ENCODE measurements at regions of chr15 and their contacts with region 1.

Region 1: GRCh38 chr15:70463460-70463881 is 299.9 kb downstream of the UACA start:
- DNase-seq: no peak
- H3K4me3 ChIP-seq: no peak overlapping the region
- H3K27ac ChIP-seq: no peak overlapping the region
- H3K4me1 ChIP-seq: peaks cover 0 to 11% (median 4%) of the 10 kb centered on the region in 4 donors
- H3K27me3 ChIP-seq: no peaks in the 10 kb centered on the region
- CTCF ChIP-seq: no peak
- EP300 ChIP-seq: no peak
- POLR2A ChIP-seq: no peak

Region 2: GRCh38 chr15:69734688-69735087 is 728.8 kb before region 1 on chr15:
- intact Hi-C with region 1: loop called (anchors 5 kb)
- DNase-seq: no peak
- H3K4me3 ChIP-seq: no peak overlapping the region
- H3K27ac ChIP-seq: peak overlapping the region in 2 of 4 donors; percentile 26 to 55
- H3K4me1 ChIP-seq: peaks cover 0 to 17% (median 15%) of the 10 kb centered on the region in 4 donors
- H3K27me3 ChIP-seq: no peaks in the 10 kb centered on the region
- CTCF ChIP-seq: no peak
- EP300 ChIP-seq: peak in 1 of 4 donors; percentile 51
- POLR2A ChIP-seq: no peak

Measured in sigmoid colon (tissue), 7 donors.